Head of caudate nucleus (tissue), 42 donors: ENCODE measurements at regions of chr17 and their contacts with region 1.

Region 1: GRCh38 chr17:36950029-36950428 is 1.3 kb downstream of the AATF start:
- DNase-seq: no peak

Region 2: GRCh38 chr17:36980280-36980761 is 30.3 kb after region 1 on chr17:
- intact Hi-C with region 1: no loop called
- DNase-seq: no peak

Region 3: DNA sequence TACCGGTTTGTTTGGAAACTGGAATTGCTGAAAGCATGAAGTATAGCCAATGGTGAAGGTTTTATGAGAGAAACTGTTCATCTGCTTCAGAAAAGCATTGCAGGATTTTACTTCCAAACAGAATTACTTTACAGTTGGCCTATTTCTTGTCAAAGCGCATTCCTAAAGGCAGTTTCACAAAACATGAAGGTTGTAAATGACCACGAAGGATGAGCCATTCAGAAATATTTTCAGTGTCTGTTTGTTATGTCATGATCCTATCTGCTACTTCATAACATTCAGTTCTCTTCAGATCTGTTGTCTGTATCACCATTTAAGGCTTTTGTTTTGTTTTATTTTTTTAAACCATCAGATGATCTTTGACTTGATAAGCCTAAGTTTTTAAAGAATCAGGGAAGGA is 44.4 kb after region 1 on chr17:
- intact Hi-C with region 1: no loop called
- DNase-seq: no peak

Region 4: GRCh38 chr17:37047631-37048104 is 97.6 kb after region 1 on chr17:
- intact Hi-C with region 1: loop called (anchors 10 kb)
- DNase-seq: peak; percentile 70 to 95 (median 89)